Gastrocnemius medialis (tissue), 4 donors: ENCODE measurements at regions of chr1 and their contacts with region 1.

Region 1: DNA sequence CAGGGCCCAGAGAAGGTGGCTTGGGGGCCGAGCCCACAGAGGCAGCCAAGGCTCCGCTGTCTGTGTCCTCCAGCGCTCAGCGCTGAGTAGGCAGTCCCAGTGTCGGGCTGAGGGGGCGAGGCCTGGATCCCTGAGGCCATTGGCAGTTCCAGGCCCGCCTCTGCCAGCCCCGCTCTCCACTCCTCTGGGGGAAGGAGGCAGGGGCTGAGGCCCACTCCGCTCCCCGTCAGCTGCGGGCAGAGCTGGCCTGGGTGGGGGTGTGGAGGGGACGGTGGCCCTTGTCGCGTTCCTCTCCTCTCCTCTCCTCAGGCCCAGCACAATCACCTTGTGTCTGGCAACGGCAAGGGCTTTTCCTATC is 132.8 kb downstream of the CASZ1 start:
- DNase-seq: peak in 1 of 2 donors; percentile 64
- ATAC-seq: peak; percentile 7 to 34
- H3K4me3 ChIP-seq: no peak overlapping the region
- H3K27ac ChIP-seq: peak overlapping the region; percentile 89 to 95 (median 92)
- H3K4me1 ChIP-seq: peaks cover 50 to 58% of the 10 kb centered on the region in 2 donors
- H3K27me3 ChIP-seq: no peaks in the 10 kb centered on the region
- CTCF ChIP-seq: no peak
- POLR2A ChIP-seq: no peak

Region 2: GRCh38 chr1:10415211-10415930 is 248.3 kb before region 1 on chr1:
- in situ Hi-C with region 1: no loop called
- intact Hi-C with region 1: no loop called
- DNase-seq: peak in 1 of 2 donors; percentile 33
- ATAC-seq: peak in 1 of 2 donors; percentile 45
- H3K4me3 ChIP-seq: no peak overlapping the region
- H3K27ac ChIP-seq: peak overlapping the region in 2 of 4 donors; percentile 10 to 26
- H3K4me1 ChIP-seq: no peaks in the 10 kb centered on the region
- H3K27me3 ChIP-seq: no peaks in the 10 kb centered on the region
- CTCF ChIP-seq: no peak
- POLR2A ChIP-seq: no peak

Region 3: DNA sequence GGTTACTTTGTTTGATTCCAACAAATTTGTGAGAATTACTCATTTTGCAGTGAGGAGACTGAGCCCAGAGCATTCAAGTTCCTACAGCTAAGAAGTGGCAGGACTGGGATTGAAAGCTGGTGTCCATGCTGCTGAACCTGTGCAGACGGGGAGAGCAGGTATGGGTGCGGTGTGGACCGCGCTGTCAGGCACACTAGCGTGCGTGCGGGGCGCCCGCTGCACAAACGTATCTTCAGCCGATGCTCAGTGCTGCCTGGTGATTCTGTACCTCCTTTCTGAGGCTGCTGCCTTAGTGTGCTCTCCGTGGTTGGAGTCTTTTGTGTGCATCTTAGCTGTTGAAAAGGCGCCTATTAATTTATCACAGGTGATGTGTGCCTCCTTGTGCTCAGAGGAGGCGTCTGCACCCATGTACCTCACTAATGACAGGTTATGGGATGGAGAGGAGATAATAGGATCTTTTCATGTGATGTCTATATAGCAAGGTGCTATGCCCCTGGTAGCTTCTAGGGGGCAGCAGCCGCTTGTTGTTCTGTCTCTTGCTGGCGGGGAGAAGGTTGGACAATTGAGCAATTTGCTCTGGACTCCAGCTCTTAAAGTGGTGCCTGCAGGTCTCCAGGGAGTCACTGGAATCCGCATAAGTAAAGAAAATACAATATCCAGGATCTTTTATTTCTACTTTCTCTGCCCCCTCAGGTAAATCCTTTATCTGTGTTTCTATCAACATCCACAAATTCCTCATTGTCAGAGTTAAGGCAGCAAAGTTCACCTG is 156.4 kb before region 1 on chr1:
- in situ Hi-C with region 1: no loop called
- intact Hi-C with region 1: loop called (anchors 5 kb)
- DNase-seq: peak; percentile 56 to 73
- ATAC-seq: peak; percentile 89 to 93
- H3K4me3 ChIP-seq: no peak overlapping the region
- H3K27ac ChIP-seq: no peak overlapping the region
- H3K4me1 ChIP-seq: peaks cover 33 to 34% of the 10 kb centered on the region in 2 donors
- H3K27me3 ChIP-seq: no peaks in the 10 kb centered on the region
- CTCF ChIP-seq: peak; percentile 83 to 90 (median 87)
- POLR2A ChIP-seq: no peak

Region 4: DNA sequence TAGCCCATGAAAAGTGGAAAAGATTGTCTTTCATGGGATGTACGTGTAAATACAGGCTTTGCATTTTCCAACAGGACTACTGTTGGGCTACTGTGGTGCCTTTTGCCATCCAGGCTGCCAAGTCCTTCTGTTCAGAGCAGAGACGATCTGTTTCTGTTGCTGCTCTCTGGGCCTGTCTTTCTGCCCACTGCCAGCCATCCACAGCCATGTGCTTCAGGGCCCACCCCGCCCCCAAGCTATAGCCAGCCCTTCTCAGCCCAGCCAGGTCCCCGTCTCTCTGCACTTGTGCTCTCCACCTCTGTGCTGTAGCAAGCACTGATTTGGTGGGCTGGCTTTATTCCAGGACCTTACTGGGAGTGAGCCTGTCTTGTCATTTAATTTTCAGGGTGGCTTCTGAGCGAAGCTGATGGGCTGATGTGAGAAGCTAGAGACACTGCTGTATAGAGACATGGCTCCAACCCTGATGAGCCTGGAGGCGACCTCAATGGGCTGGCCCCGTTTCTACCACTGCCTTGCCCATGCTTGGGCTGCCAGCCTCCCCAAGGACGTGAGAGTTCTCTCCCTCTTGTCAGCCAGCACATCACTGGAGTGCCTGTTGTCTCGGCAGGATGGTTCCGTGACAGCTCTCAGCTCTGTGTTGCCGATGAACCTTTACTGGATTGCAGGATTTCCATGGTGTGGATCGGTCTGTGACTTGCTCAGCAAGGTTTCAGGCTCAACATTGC is 51.1 kb before region 1 on chr1:
- in situ Hi-C with region 1: no loop called
- intact Hi-C with region 1: loop called (anchors 5 kb)
- DNase-seq: no peak
- ATAC-seq: peak in 1 of 2 donors; percentile 18
- H3K4me3 ChIP-seq: no peak overlapping the region
- H3K27ac ChIP-seq: peak overlapping the region; percentile 3 to 73 (median 64)
- H3K4me1 ChIP-seq: peaks cover 5 to 22% of the 10 kb centered on the region in 2 donors
- H3K27me3 ChIP-seq: no peaks in the 10 kb centered on the region
- CTCF ChIP-seq: no peak
- POLR2A ChIP-seq: no peak

Region 5: GRCh38 chr1:10745886-10746455 is 82.3 kb after region 1 on chr1:
- in situ Hi-C with region 1: no loop called
- intact Hi-C with region 1: loop called (anchors 2 kb)
- DNase-seq: peak; percentile 93 to 98
- ATAC-seq: peak; percentile 90 to 92
- H3K4me3 ChIP-seq: peak overlapping the region; percentile 22 to 42 (median 34)
- H3K27ac ChIP-seq: peak overlapping the region; percentile 95 to 97 (median 96)
- H3K4me1 ChIP-seq: peaks cover 40 to 55% of the 10 kb centered on the region in 2 donors
- H3K27me3 ChIP-seq: no peaks in the 10 kb centered on the region
- CTCF ChIP-seq: peak in 1 of 5 experiments; percentile 15
- POLR2A ChIP-seq: peak; percentile 66 to 70

Region 6: DNA sequence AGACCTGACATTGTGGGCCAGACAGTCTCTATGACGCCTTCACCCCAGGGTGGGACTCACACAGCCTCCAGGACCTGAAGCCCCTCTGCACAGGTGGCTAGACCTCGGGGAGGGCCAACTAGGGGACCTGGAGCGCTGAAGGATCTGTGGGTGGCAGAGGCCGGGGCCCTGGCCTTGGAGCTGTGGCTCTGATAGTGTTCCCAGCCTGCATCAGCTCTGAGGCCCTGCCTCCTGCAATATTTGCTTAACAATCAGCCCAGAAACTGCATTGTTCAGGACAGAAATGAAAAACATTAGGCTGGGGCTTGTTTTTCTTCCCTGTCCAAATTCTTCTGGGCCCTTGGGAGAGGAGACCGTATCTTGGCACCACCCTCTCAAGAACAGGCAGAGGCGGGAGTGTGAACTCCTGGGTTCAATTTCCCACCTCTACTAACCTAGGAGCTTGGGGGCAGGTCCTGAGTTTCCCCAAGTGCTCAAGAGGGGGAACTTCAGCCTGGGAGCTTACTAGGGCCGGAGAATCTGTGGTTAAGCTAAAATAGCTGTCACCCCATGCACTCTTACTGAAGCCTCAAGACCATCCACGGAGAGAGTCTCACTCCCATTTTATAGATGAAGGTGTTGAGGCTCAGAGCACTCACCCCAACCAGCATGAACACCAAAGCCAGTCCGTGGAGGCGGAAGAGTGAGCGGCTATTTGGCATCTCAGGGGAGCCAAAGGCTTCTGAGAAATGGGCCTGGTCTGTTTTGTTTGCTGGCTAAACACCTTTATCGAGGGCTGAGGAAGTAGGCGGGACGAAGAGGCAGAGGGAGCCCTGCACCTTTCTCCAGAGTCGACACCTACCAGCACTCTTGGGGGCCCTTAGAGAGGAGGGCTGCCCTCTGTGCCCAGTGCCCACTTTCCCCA is 151.5 kb after region 1 on chr1:
- in situ Hi-C with region 1: no loop called
- intact Hi-C with region 1: no loop called
- DNase-seq: no peak
- ATAC-seq: no peak
- H3K4me3 ChIP-seq: no peak overlapping the region
- H3K27ac ChIP-seq: no peak overlapping the region
- H3K4me1 ChIP-seq: peaks cover 0 to 6% of the 10 kb centered on the region in 2 donors
- H3K27me3 ChIP-seq: no peaks in the 10 kb centered on the region
- CTCF ChIP-seq: no peak
- POLR2A ChIP-seq: no peak

Region 7: GRCh38 chr1:10932088-10932487 is 268.4 kb after region 1 on chr1:
- in situ Hi-C with region 1: no loop called
- intact Hi-C with region 1: no loop called
- DNase-seq: no peak
- ATAC-seq: no peak
- H3K4me3 ChIP-seq: no peak overlapping the region
- H3K27ac ChIP-seq: no peak overlapping the region
- H3K4me1 ChIP-seq: no peaks in the 10 kb centered on the region
- H3K27me3 ChIP-seq: no peaks in the 10 kb centered on the region
- CTCF ChIP-seq: no peak
- POLR2A ChIP-seq: no peak

Region 8: DNA sequence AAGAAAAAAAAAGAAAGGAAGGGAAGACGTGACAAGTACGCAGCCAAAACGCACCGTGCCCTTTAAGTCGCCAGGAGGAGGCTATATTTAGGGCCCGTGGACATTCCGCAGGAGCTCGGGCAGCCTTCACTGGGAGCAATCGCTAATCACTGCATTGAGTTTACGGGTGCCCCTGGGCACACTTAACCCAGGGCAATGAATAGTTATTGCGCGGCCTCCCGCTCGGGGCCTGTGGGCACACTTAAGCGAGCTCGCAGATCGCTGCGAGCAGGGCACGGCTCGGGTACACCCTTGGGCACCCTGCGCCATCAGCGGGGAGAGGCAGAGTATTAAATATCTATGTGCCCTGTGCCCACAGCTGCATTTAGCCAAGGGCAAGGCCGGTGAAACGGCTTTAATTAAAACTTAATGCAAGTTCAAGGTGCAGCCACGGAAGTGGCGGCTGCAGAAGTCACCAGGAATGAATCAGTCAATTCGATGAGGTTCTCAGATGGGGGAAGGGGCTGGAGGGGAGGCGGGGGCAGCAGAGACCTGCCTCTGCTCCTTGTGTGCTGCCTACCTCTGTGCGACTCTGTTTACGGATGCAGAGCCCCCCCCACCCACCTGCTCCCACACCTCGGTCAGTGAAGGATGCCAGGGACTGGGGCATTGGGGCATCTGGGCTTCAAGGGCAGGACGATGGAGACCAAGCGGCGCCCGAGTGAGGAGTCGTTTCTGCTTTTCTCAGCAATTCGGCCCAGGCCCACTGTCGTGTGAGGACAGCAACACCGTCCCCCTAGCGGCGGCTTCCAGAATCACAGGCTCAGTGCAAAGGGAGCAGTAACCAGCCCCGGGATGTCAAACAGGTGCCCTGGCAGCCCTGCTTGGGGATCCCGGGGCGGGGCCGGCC is 297.0 kb after region 1 on chr1:
- in situ Hi-C with region 1: no loop called
- intact Hi-C with region 1: loop called (anchors 10 kb)
- DNase-seq: peak; percentile 72 to 90
- ATAC-seq: peak; percentile 76 to 79
- H3K4me3 ChIP-seq: peak overlapping the region; percentile 44 to 62 (median 52)
- H3K27ac ChIP-seq: peak overlapping the region; percentile 91 to 98 (median 92)
- H3K4me1 ChIP-seq: peaks cover 32 to 37% of the 10 kb centered on the region in 2 donors
- H3K27me3 ChIP-seq: no peaks in the 10 kb centered on the region
- CTCF ChIP-seq: peak; percentile 84 to 95 (median 93)
- POLR2A ChIP-seq: peak in 1 of 2 donors; percentile 24